Endothelial cell of umbilical vein (primary cell): ENCODE measurements at regions of chr4 and their contacts with region 1.

Region 1: GRCh38 chr4:153573881-153574802 is 108.0 kb downstream of the TMEM131L start:
- DNase-seq: peak; percentile 85
- H3K4me3 ChIP-seq: no peak overlapping the region
- H3K27ac ChIP-seq: no peak overlapping the region
- H3K4me1 ChIP-seq: peaks cover 2% of the 10 kb centered on the region
- H3K27me3 ChIP-seq: no peaks in the 10 kb centered on the region
- CTCF ChIP-seq: peak; percentile 46 to 59
- POLR2A ChIP-seq: no peak

Region 2: DNA sequence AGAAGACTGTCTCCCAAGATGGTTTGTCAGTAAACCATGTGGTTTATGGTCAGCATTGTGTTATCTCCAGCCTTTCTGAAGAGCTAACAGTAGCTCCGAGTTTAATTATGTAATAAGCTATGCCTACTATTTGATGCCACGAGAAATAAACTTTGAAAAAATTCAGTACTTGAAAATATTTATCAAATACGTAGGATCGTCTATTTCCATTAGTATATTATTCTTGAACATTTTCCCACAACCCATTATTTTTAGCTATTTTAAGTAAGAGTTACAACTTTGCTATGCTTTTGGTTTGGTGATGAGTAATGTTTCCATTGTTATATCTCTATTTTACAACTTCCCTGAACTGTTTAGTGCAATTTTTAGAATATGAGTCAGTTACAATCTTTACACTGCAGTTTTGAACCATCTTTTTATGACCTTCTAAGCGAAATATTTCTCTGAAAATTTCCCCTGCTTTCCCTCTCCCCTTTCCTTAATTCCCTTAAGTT is 414.4 kb before region 1 on chr4:
- CTCF ChIA-PET with region 1: interaction called, 11 read pairs
- POLR2A ChIA-PET with region 1: no interaction called
- dilution Hi-C with region 1: no loop called
- intact Hi-C with region 1: no loop called
- DNase-seq: peak; percentile 84
- H3K4me3 ChIP-seq: peak overlapping the region in 1 of 3 experiments; percentile 7
- H3K27ac ChIP-seq: peak overlapping the region; percentile 38
- H3K4me1 ChIP-seq: peaks cover 10% of the 10 kb centered on the region
- H3K27me3 ChIP-seq: peaks cover 17 to 34% of the 10 kb centered on the region in 2 experiments
- CTCF ChIP-seq: no peak
- POLR2A ChIP-seq: no peak

Region 3: DNA sequence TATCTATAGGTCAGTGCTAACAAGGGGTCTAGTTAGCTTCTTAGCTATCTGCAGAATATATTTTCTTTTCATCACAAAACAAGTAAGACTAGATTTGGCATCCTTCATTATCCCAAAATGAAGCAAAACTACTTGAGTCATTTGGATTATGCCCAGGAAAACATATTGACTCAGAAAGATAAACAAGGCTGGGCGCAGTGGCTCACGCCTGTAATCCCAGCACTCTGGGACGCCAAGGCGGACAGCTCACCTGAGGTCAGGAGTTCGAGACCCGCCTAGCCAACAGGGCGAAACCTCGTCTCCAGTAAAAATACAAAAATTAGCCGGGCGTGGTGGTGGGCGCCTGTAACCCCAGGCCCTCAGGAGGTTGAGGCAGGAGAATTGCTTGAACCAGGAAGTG is 247.6 kb before region 1 on chr4:
- CTCF ChIA-PET with region 1: interaction called, 19 read pairs
- POLR2A ChIA-PET with region 1: no interaction called
- dilution Hi-C with region 1: no loop called
- intact Hi-C with region 1: no loop called
- DNase-seq: peak; percentile 37
- H3K4me3 ChIP-seq: no peak overlapping the region
- H3K27ac ChIP-seq: no peak overlapping the region
- H3K4me1 ChIP-seq: peaks cover 19% of the 10 kb centered on the region
- H3K27me3 ChIP-seq: no peaks in the 10 kb centered on the region
- CTCF ChIP-seq: no peak
- POLR2A ChIP-seq: no peak

Region 4: DNA sequence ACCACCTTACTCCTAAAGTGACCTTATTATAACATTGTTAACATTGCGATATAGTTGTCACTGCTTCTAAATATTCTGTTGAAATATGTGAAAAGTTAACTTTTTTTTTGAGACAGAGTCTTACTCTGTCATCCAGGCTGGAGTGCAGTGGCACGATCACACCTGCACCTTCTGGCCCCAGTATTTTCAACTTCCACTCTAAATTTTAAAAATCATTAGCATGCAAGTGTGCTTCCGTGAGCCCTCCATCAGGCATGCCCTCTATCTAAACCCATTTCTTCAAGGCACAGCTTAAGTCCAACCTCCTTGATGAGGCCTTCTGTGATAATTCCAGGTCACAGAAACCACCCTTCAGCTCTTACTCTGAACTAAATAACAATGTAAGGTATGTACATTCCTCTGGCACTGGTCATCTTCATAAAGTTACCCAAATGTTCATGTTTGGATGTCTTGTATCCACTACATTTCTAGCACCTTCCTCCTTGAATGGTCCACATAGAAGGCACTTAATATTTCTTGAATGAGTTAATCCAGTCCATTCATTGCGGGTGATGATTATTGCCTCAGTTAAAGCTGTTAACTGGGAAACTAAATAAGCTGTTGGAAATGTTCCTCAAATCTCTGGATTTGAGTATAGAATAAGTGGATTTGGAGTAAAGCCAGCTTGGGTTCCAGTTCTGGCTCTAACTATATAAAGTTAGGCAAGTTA is 146.6 kb before region 1 on chr4:
- CTCF ChIA-PET with region 1: interaction called, 33 read pairs
- POLR2A ChIA-PET with region 1: no interaction called
- dilution Hi-C with region 1: no loop called
- intact Hi-C with region 1: no loop called
- DNase-seq: no peak
- H3K4me3 ChIP-seq: no peak overlapping the region
- H3K27ac ChIP-seq: no peak overlapping the region
- H3K4me1 ChIP-seq: no peaks in the 10 kb centered on the region
- H3K27me3 ChIP-seq: no peaks in the 10 kb centered on the region
- CTCF ChIP-seq: no peak
- POLR2A ChIP-seq: no peak

Region 5: DNA sequence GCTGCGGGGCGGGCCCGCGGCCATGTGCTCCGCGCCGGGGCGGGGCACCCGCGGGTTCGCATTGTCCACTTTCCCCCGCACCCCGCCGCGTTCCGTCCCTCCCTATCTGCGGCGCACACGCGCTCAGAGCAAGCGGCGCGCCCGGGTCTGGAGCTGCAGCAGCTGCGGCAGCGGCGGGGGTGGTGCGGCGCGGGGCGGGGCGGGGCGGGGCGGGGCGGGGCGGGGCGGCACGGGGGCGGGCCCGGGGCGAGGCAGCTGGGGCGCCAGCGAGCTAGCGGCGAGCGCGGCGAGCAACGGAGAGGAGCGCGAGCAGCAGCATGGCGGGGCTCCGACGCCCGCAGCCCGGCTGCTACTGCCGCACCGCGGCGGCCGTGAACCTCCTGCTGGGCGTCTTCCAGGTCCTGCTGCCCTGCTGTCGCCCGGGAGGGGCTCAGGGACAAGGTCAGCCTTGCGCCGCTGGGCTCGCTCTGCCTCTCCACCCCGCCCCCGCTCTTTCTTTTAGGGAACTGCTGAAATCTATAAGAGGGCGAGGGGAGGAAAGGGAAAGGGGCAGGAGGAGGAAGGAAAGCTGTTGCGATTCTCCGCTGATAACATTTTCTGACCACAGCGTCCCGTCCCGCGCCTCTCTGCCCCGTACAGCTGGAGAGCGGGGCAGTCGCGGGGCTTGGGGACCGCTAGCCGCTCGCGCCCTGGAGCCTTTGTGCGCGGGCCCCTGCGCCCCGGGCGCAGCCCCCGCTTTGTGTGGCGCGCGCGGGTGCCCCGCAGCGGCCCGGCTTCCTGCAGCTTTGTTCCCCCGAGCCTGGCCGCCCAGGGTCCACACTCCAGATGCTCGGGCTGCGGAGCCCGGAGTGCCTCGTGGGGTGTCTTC is 107.8 kb before region 1 on chr4 and contains the start of gene TMEM131L:
- CTCF ChIA-PET with region 1: interaction called, 37 read pairs
- POLR2A ChIA-PET with region 1: interaction called, 6 read pairs
- dilution Hi-C with region 1: no loop called
- intact Hi-C with region 1: loop called (anchors 1 kb)
- DNase-seq: peak; percentile 68
- H3K4me3 ChIP-seq: peak within 1 kb of the TSS; percentile 83 to 93 (median 92)
- H3K27ac ChIP-seq: peak within 1 kb of the TSS; percentile 40
- H3K4me1 ChIP-seq: peaks cover 23% of the 10 kb centered on the region
- H3K27me3 ChIP-seq: no peaks in the 10 kb centered on the region
- CTCF ChIP-seq: peak in 1 of 2 donors; percentile 17
- POLR2A ChIP-seq: no peak
- total RNA-seq, gene TMEM131L: 19.1 and 21.2 TPM in 2 replicates

Region 6: GRCh38 chr4:153543351-153543750 is 30.8 kb before region 1 on chr4:
- CTCF ChIA-PET with region 1: interaction called, 11 read pairs
- POLR2A ChIA-PET with region 1: interaction called, 3 read pairs
- dilution Hi-C with region 1: no loop called
- intact Hi-C with region 1: no loop called
- DNase-seq: no peak
- H3K4me3 ChIP-seq: no peak overlapping the region
- H3K27ac ChIP-seq: no peak overlapping the region
- H3K4me1 ChIP-seq: no peaks in the 10 kb centered on the region
- H3K27me3 ChIP-seq: no peaks in the 10 kb centered on the region
- CTCF ChIP-seq: no peak
- POLR2A ChIP-seq: no peak

Region 7: DNA sequence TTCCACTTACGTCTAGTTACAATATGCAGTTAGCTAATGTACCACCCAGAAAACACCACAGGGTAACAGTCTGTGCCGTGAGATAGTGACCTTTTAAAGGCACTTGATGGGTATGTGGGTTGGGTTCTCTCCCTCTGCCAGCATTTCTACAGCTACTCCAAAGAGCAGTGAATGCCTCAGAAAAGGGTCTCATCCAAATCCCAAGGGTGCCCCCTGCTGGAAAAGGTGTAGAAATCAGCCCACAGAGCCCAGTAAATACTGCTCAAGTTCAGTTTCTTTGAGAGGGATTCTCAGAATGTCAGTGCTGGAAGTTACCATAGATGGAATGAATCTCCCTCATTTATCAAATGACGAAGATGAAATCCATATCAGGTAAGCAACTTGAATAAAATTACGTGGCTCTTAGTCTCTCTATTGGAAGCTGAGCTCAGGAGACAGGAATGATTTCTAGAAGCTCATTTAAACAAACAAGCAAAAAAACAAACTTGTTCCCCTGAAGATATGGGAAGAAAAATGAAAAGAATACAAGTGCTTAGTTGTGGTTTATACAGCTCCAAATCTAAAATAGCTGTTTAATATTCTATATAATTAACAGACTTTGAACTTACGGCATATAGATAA is 176.2 kb after region 1 on chr4:
- CTCF ChIA-PET with region 1: interaction called, 12 read pairs
- POLR2A ChIA-PET with region 1: no interaction called
- dilution Hi-C with region 1: no loop called
- intact Hi-C with region 1: loop called (anchors 1 kb)
- DNase-seq: peak; percentile 69
- H3K4me3 ChIP-seq: no peak overlapping the region
- H3K27ac ChIP-seq: no peak overlapping the region
- H3K4me1 ChIP-seq: no peaks in the 10 kb centered on the region
- H3K27me3 ChIP-seq: peaks cover 3 to 7% of the 10 kb centered on the region in 2 experiments
- CTCF ChIP-seq: peak; percentile 70 to 75
- POLR2A ChIP-seq: no peak